ENCODE measurements at regions of chr2 and their contacts with region 1.

Region 1: DNA sequence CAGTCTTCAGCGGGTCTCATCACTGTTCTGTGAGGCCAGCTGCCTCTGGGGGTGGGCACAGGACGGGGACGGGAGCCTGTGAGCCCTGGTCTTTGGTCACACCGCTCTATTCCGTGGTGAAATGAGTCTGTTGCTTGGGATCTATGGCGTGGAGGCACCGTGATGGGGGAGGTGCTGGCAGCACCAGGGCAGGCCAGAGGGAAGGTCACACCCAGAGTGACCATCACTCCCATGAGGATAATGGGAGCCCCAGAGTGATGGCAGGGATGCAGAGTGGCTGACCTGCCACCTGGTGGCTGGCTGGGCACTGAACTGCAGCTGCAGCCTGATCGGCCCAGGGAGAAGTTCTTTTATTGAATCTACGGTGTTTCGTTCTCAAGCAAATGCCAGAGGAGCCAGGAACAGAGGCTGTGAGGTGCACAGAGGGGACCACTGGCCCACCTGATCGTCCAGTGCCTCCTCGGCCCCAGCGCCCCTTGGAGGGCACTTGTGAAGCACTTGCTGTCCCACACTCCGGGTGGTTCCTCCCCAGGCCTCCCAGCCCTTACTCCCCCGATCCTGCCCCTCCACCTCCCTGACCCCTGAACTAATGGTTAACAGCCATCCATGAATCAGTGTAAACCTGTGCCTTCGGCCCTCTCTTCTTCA is 17.9 kb downstream of the KCNIP3 start:
- DNase-seq: peak; percentile 55 to 57
- H3K4me3 ChIP-seq: no peak overlapping the region
- H3K4me3 Mint-ChIP-seq: no peak overlapping the region
- H3K27ac Mint-ChIP-seq: no peak overlapping the region
- H3K4me1 ChIP-seq: no peaks in the 10 kb centered on the region
- H3K4me1 Mint-ChIP-seq: no peaks in the 10 kb centered on the region
- H3K27me3 ChIP-seq: no peaks in the 10 kb centered on the region; the same call in 1 of the 2 replicates
- H3K27me3 Mint-ChIP-seq: peaks cover 4% of the 10 kb centered on the region
- CTCF ChIP-seq: peak; percentile 66 to 80

Region 2: GRCh38 chr2:95034221-95034620 is 280.9 kb before region 1 on chr2:
- CTCF ChIA-PET with region 1: no interaction called
- POLR2A ChIA-PET with region 1: no interaction called
- intact Hi-C with region 1: no loop called
- DNase-seq: no peak
- H3K4me3 ChIP-seq: no peak overlapping the region
- H3K4me3 Mint-ChIP-seq: no peak overlapping the region
- H3K27ac Mint-ChIP-seq: no peak overlapping the region
- H3K4me1 ChIP-seq: no peaks in the 10 kb centered on the region
- H3K4me1 Mint-ChIP-seq: no peaks in the 10 kb centered on the region
- H3K27me3 ChIP-seq: no peaks in the 10 kb centered on the region
- H3K27me3 Mint-ChIP-seq: peaks cover 6% of the 10 kb centered on the region
- CTCF ChIP-seq: no peak

Region 3: DNA sequence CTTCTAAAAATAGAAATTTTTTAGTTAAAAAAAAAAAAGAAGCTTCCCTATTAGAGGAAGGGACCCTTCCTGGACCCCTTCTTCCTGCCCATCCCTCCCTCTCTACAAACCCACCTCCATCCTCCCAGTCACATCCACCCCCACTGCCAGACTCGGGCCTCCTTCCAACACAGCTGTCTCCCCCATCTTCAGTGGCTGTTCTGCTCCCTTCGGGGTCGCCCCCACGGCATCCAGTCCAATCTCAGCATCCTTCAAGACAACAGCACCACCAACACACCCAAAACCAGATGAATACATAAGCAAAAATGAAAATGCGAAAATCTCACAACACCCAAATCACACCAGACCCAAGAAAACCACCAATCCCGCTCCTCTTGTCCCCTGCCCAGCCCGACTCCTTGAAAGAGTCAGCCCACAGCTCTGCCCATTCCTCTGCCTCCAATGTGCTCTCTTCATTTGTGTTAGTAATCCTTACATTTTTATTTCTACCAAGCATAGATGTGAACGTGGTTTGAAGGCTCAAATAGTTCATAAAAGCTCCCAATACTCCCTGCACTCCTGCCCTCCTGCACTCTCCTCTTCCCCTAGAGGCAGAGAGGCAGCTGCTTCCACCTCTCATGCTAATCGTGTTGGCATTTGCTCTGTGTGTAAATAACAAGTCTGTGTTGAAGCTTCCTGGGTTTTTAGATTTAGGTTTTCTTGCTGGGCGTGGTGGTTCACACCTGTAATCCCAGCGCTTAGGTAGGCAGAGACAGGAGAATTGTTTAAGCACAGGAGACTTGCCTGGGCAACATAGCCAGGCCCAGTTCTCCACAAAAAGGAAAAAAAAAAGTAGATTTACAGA is 252.6 kb before region 1 on chr2:
- CTCF ChIA-PET with region 1: no interaction called
- POLR2A ChIA-PET with region 1: no interaction called
- intact Hi-C with region 1: no loop called
- DNase-seq: peak in 1 of 2 experiments; percentile 18
- H3K4me3 ChIP-seq: no peak overlapping the region
- H3K4me3 Mint-ChIP-seq: no peak overlapping the region
- H3K27ac Mint-ChIP-seq: no peak overlapping the region
- H3K4me1 ChIP-seq: no peaks in the 10 kb centered on the region
- H3K4me1 Mint-ChIP-seq: no peaks in the 10 kb centered on the region
- H3K27me3 ChIP-seq: no peaks in the 10 kb centered on the region
- H3K27me3 Mint-ChIP-seq: peaks cover 10% of the 10 kb centered on the region
- CTCF ChIP-seq: no peak

Region 4: DNA sequence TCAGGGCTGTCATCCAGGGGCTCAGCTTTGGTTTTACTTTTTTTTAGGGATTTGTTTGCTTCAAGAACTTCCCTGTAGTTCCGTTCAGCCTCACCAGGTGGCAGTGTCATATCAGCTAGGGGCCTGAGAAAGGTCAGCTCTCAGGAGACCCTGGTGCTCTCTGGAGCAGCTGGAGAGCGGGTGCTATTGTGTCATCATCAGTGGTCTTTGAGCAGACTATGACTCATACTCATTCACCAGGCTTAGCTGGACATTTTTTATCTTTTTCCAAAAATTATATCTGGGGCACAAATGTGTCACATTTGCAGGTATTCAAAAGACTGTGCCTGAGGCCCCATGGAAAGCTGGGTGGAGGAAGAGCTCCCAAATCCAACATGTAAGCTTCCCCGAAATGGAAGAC is 83.4 kb before region 1 on chr2:
- CTCF ChIA-PET with region 1: interaction called, 22 read pairs
- POLR2A ChIA-PET with region 1: no interaction called
- intact Hi-C with region 1: loop called (anchors 1 kb)
- DNase-seq: peak; percentile 78 to 79
- H3K4me3 ChIP-seq: no peak overlapping the region
- H3K4me3 Mint-ChIP-seq: no peak overlapping the region
- H3K27ac Mint-ChIP-seq: no peak overlapping the region
- H3K4me1 ChIP-seq: no peaks in the 10 kb centered on the region
- H3K4me1 Mint-ChIP-seq: no peaks in the 10 kb centered on the region
- H3K27me3 ChIP-seq: no peaks in the 10 kb centered on the region
- H3K27me3 Mint-ChIP-seq: peaks cover 3% of the 10 kb centered on the region
- CTCF ChIP-seq: peak; percentile 77 to 81

Measured in Caco-2 (cell line).